Dorsolateral prefrontal cortex (tissue), 120 donors: ENCODE measurements at regions of chr6 and their contacts with region 1.

Region 1: DNA sequence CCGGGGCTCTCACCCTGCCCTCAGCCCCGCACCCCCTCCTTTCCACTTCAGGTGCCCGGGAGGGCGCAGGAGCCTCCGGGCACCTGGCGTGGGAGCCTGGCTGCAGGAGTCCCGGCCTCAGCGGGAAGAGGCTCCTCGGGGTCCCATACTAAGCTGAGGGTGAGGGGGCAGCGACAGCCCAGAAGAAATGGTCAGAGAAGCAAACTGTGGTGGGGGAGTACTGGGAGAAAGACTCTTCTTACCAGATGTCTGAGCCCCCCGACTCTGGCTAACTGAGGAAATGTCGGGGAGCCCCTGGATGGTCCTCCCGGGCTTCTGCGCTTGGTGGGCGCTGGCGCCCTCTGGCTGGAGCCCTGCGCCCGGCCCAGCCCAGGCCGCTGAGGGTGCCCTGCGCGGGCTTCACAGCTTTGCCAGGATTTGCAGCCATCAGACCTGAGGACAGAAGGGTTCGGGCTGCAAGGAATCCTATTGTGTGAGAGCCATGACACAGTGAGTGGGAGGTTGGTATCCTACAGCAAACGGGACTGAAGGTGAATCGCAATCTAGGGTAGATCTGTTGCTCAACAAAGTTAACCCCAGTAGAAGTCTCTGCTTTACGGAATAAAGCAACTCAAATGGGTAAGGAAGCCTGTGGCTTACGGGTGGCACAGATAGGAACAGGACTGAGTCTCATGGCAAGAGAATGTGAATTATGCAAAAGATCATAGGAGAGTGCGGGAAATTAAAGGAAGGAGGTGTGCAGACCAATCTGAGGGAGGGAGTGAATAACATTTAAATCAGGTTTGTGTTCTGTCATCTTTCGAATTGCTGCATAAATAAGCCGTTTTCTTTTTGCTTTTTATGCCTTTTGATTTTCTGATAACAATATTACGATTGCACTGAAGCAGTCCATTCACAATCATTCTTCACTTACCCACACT is 639 bp upstream of the RCAN2 start:
- DNase-seq: peak; percentile 64 to 88 (median 78)
- H3K4me3 ChIP-seq: peak overlapping the region; percentile 61 to 90 (median 78)
- H3K27ac ChIP-seq: peak overlapping the region in 58 of 59 donors; percentile 61 to 95 (median 89)
- H3K27me3 ChIP-seq: no peaks in the 10 kb centered on the region
- CTCF ChIP-seq: peak; percentile 17 to 92 (median 78)

Region 2: DNA sequence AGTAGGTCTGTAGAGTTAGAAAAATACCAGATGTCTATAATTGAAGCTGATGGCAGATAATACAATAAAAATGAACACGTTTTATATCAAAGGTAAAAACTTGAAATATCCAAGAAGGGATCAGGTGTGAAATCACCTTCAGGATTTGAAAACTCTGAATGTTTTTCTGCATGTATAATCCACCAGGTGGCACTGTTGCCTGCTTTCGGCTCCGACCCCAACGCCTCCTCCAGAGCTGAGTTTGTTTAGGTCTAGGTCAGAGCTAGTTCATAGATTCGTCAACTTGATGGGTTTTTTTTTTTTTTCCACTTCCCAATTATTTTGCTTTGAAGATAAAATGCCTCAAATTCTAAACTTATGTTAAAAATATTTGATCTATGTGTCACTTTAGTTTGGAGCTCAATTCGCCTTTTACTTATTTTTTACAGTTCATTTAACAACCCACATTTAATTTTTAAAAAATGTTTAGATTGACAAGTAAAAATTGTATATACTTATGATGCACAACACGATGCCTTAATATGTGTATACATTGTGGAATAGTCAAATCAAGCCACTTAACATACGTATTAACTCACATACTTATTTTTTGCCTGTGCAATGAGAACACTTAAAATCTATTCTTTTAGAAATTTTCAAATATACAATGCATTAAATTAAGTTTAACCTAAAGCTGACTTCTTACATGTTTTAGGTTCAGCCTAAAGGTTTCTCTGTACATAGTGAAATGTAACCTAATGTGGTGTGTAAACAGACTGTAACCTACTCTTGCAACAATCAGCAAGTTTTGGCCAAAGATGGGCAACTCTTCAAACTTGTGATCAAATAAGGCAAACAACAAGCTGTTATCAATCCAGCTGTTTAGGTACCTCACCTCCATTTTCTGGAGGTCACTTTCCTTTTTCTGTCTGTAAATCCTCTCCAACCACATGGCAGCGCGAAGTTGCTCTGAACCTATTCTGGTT is 401.5 kb before region 1 on chr6:
- intact Hi-C with region 1: loop called in 1 of 2 experiments (anchors 5 kb)
- DNase-seq: peak; percentile 50 to 75 (median 62)
- H3K4me3 ChIP-seq: no peak overlapping the region
- H3K27ac ChIP-seq: no peak overlapping the region
- H3K27me3 ChIP-seq: no peaks in the 10 kb centered on the region
- CTCF ChIP-seq: peak; percentile 83 to 98 (median 92)

Region 3: DNA sequence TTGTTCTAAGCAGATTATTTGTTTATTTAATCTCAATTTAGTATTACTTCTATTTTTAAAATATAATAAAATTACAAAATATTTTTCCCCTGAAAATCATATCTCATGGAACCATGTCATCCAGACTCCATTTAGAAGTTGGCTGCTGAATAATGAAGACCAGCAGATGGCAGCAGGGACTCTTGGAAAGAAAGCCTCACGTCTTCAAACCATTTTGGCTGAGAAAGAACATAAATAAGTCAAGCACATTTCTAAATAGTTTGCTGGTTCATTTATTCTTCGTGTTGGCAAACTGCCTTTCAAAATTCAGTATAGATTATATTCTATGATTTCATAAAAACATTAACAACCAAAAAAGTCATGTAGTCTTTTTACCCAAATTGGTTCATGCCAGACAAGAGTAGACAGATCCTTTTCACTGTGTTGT is 72.3 kb before region 1 on chr6:
- intact Hi-C with region 1: loop called (anchors 2 to 5 kb)
- DNase-seq: peak in 7 of 10 donors; percentile 54 to 87 (median 64)
- H3K4me3 ChIP-seq: no peak overlapping the region
- H3K27ac ChIP-seq: peak overlapping the region in 11 of 59 donors; percentile 1 to 43 (median 14)
- H3K27me3 ChIP-seq: no peaks in the 10 kb centered on the region
- CTCF ChIP-seq: peak; percentile 70 to 97 (median 89)

Region 4: DNA sequence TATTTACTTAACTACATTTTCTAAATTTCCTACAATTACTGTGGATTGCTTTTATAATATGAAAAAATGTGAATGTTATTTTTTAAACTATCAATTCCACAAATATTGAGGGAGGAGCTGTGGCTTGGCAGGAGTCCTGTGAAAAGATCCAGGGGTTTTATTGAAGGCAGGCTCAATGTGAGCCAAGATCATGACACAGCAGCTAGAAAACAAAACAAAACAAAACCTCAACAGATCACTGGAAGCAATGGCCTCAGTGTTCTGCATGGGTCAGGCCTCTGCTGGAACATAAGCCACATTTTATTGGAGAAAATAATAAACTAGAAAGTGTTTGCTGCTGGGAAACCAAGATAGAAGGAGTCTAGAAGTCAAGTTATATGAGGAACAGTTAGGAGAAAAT is 18.8 kb after region 1 on chr6:
- intact Hi-C with region 1: loop called in 1 of 2 experiments (anchors 1 kb)
- DNase-seq: peak in 4 of 10 donors; percentile 32 to 61 (median 52)
- H3K4me3 ChIP-seq: peak overlapping the region in 9 of 59 donors; percentile 12 to 34 (median 16)
- H3K27ac ChIP-seq: peak overlapping the region; percentile 44 to 98 (median 91)
- H3K27me3 ChIP-seq: no peaks in the 10 kb centered on the region
- CTCF ChIP-seq: peak in 6 of 56 donors; percentile 6 to 43 (median 20)

Region 5: DNA sequence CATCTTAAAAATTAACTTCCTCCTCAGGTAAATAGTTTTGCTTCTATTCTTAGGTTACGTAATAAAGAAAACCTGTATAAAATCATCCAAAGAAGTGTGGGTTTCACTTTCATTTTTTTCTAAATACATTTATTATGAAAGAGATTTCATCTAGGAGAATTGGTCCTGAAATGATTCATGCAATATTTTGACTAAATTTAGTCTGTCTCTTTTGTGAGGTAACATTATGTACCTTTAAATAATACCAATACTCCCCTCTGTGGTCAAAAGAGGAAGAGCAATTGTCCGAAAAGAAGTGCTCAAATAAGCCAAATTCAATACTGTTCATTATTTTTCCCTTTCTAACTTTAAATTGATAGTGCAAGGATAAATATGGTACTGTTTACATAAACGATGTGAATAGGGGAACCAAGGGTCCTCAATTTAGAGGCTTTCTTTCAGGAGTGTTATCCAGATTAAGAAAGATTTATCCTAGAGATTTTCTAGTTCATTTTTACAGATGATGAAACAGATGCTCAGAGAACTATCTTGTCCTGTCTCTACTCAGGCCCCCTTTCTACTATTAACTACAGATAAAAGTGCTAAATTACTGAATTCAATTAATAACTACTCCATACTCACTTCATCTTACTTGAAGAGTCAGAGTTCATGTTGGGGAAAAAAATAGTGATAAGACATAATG is 134.5 kb after region 1 on chr6:
- intact Hi-C with region 1: loop called (anchors 2 to 5 kb)
- DNase-seq: no peak
- H3K4me3 ChIP-seq: peak overlapping the region in 19 of 59 donors; percentile 4 to 43 (median 17)
- H3K27ac ChIP-seq: peak overlapping the region in 10 of 59 donors; percentile 2 to 58 (median 15)
- H3K27me3 ChIP-seq: no peaks in the 10 kb centered on the region
- CTCF ChIP-seq: peak; percentile 66 to 93 (median 82)